ENCODE measurements at regions of chr19 and their contacts with region 1.

Region 1: GRCh38 chr19:13262450-13262849 is 112.2 kb downstream of the IER2 start:
- DNase-seq: no peak
- ATAC-seq: peak; percentile 41 to 74 (median 52)
- H3K4me3 ChIP-seq: no peak overlapping the region
- H3K27ac ChIP-seq: no peak overlapping the region
- H3K4me1 ChIP-seq: peaks cover 9% of the 10 kb centered on the region
- H3K27me3 ChIP-seq: peaks cover 0 to under 1% (median 0%) of the 10 kb centered on the region in 3 donors
- CTCF ChIP-seq: peak; percentile 60

Region 2: GRCh38 chr19:12965017-12965811 is 297.2 kb before region 1 on chr19:
- intact Hi-C with region 1: loop called in 1 of 2 experiments (anchors 5 kb)
- DNase-seq: peak; percentile 84 to 90
- ATAC-seq: peak; percentile 96 to 99 (median 96)
- H3K4me3 ChIP-seq: peak overlapping the region; percentile 65
- H3K27ac ChIP-seq: peak overlapping the region; percentile 63
- H3K4me1 ChIP-seq: no peaks in the 10 kb centered on the region
- H3K27me3 ChIP-seq: no peaks in the 10 kb centered on the region
- CTCF ChIP-seq: peak; percentile 83

Region 3: GRCh38 chr19:13162518-13163314 is 99.7 kb before region 1 on chr19:
- intact Hi-C with region 1: loop called in 1 of 2 experiments (anchors 5 kb)
- DNase-seq: peak; percentile 97 to 98
- ATAC-seq: peak; percentile 93 to 94 (median 94)
- H3K4me3 ChIP-seq: peak overlapping the region; percentile 61
- H3K27ac ChIP-seq: peak overlapping the region; percentile 81
- H3K4me1 ChIP-seq: peaks cover 23% of the 10 kb centered on the region
- H3K27me3 ChIP-seq: no peaks in the 10 kb centered on the region
- CTCF ChIP-seq: no peak

Region 4: DNA sequence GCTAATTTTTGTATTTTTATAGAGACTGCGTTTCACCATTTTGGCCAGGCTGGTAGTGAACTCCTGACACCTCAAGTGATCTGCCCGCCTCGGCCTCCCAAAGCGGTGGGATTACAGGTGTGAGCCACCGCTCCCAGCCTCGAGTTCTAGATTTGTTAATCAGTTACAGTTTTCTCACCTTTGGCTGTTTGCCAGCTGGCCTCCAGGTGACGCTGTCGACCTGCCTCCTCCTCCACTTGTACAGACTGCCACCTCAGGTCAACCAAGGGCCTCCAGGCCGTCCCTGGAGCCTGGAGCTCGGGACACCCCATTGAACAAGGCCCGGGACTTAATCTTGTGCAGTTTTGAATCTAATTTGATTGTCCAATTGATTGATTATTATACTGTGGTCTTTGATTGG is 66.8 kb before region 1 on chr19:
- intact Hi-C with region 1: loop called in 1 of 2 experiments (anchors 2 kb)
- DNase-seq: no peak
- ATAC-seq: no peak
- H3K4me3 ChIP-seq: no peak overlapping the region
- H3K27ac ChIP-seq: no peak overlapping the region
- H3K4me1 ChIP-seq: no peaks in the 10 kb centered on the region
- H3K27me3 ChIP-seq: no peaks in the 10 kb centered on the region
- CTCF ChIP-seq: no peak

Region 5: GRCh38 chr19:13483215-13483614 is 220.8 kb after region 1 on chr19:
- intact Hi-C with region 1: no loop called
- DNase-seq: no peak
- ATAC-seq: no peak
- H3K4me3 ChIP-seq: no peak overlapping the region
- H3K27ac ChIP-seq: no peak overlapping the region
- H3K4me1 ChIP-seq: no peaks in the 10 kb centered on the region
- H3K27me3 ChIP-seq: no peaks in the 10 kb centered on the region
- CTCF ChIP-seq: no peak